A549 (cell line): ENCODE measurements at regions of chr16 and their contacts with region 1.

Region 1: GRCh38 chr16:11396241-11397048 is 51.2 kb downstream of the RMI2 start:
- DNase-seq: peak; percentile 67 to 94
- ATAC-seq: peak; percentile 74 to 93
- H3K4me3 ChIP-seq: no peak overlapping the region
- H3K27ac ChIP-seq: peak overlapping the region; percentile 73 to 81
- H3K4me1 ChIP-seq: peaks cover 4% of the 10 kb centered on the region; the same call in 2 of the 3 replicates
- CTCF ChIP-seq: peak; percentile 93
- EP300 ChIP-seq: no peak
- POLR2A ChIP-seq: no peak
- RAD21 ChIP-seq: peak; percentile 99

Region 2: DNA sequence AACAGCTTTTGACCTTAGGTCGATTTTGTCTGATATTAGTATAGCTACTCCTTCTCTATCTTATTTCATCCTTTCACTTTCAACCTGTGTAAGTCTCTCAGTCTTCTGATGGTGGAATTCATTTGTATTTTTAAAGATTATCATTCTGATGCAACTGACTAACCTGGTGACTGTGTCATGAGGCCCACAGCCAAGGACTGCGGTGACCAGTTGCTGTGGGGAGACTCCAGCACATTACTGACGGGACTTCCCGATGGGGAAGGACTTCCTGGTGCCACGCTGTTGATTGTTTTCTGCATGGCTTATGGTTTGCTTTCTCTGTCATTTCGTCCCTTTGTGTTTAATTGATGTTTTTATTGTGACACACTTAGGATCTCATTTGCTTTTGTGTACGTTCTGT is 17.0 kb before region 1 on chr16:
- CTCF ChIA-PET with region 1: interaction called, 300 read pairs
- POLR2A ChIA-PET with region 1: no interaction called
- DNase-seq: no peak
- ATAC-seq: no peak
- H3K4me3 ChIP-seq: no peak overlapping the region
- H3K27ac ChIP-seq: no peak overlapping the region
- H3K4me1 ChIP-seq: no peaks in the 10 kb centered on the region
- CTCF ChIP-seq: no peak
- EP300 ChIP-seq: no peak
- POLR2A ChIP-seq: no peak
- RAD21 ChIP-seq: no peak

Region 3: GRCh38 chr16:11423315-11424117 is 27.1 kb after region 1 on chr16:
- CTCF ChIA-PET with region 1: interaction called, 25 read pairs
- POLR2A ChIA-PET with region 1: no interaction called
- DNase-seq: no peak
- ATAC-seq: 0 out of 6 replicates have a peak, but pooled peaks of 1 of the 2 experiments have one; percentile 34
- H3K4me3 ChIP-seq: no peak overlapping the region
- H3K27ac ChIP-seq: no peak overlapping the region
- H3K4me1 ChIP-seq: no peaks in the 10 kb centered on the region
- CTCF ChIP-seq: no peak
- EP300 ChIP-seq: no peak
- POLR2A ChIP-seq: no peak
- RAD21 ChIP-seq: no peak

Region 4: DNA sequence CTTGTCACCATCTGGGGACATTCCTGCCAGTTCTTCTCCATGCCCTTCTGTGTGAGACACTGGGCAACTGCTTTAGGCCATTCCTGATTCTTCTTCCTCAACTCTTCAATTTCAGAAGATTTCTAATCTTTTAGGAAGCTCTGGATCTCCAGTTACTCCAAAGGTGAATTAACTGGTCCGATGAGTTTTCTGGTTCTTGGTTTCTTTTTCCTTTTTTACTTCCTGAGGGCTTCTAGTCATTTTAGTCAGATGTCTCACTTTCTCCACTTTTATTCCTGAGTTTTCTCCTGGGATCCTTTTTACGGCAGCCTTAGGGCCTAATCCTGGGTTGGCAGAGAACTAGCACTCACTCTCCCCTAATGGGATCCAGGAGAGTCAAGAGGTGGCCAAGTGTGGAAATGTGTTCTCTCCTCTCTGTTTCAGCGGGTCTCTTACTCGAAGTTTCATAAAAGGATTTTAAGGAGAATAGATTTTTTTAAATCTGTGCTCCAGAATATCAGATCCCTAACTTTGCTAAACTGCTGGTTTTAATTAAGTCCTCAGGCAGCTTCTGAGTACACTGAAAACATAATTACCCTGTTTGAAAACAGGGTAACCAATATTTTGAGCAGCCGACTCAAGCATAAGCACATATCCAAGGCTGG is 56.4 kb after region 1 on chr16:
- CTCF ChIA-PET with region 1: no interaction called
- POLR2A ChIA-PET with region 1: no interaction called
- DNase-seq: no peak
- ATAC-seq: no peak
- H3K4me3 ChIP-seq: no peak overlapping the region
- H3K27ac ChIP-seq: no peak overlapping the region
- H3K4me1 ChIP-seq: no peaks in the 10 kb centered on the region
- CTCF ChIP-seq: no peak
- EP300 ChIP-seq: no peak
- POLR2A ChIP-seq: no peak
- RAD21 ChIP-seq: no peak

Region 5: DNA sequence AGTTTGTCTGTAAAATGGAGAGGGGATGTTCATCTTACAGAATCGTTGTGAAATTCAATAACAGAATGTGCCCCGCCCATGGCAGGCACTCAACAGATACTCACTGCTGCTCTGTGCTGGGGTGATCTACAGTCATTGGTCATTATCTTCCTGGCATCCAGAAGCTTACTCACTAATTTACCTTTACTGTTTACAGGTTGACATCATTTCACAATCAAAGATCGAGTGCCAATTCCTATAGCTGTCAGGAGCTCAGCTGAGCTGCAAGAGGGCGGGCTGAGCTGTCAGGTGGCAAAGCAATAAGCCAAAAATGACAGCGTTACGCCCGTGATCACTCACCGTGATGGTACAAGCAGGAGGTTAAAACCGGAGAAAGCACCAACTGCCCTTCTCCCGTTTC is 139.0 kb after region 1 on chr16:
- CTCF ChIA-PET with region 1: interaction called, 12 read pairs
- POLR2A ChIA-PET with region 1: no interaction called
- DNase-seq: peak in 1 of 2 experiments; percentile 63
- ATAC-seq: peak; percentile 20 to 41; a peak in 3 of 6 replicates
- H3K4me3 ChIP-seq: no peak overlapping the region
- H3K27ac ChIP-seq: peak overlapping the region; percentile 56 to 80
- H3K4me1 ChIP-seq: peaks cover 32% of the 10 kb centered on the region
- CTCF ChIP-seq: no peak
- EP300 ChIP-seq: no peak
- POLR2A ChIP-seq: no peak
- RAD21 ChIP-seq: no peak

Region 6: DNA sequence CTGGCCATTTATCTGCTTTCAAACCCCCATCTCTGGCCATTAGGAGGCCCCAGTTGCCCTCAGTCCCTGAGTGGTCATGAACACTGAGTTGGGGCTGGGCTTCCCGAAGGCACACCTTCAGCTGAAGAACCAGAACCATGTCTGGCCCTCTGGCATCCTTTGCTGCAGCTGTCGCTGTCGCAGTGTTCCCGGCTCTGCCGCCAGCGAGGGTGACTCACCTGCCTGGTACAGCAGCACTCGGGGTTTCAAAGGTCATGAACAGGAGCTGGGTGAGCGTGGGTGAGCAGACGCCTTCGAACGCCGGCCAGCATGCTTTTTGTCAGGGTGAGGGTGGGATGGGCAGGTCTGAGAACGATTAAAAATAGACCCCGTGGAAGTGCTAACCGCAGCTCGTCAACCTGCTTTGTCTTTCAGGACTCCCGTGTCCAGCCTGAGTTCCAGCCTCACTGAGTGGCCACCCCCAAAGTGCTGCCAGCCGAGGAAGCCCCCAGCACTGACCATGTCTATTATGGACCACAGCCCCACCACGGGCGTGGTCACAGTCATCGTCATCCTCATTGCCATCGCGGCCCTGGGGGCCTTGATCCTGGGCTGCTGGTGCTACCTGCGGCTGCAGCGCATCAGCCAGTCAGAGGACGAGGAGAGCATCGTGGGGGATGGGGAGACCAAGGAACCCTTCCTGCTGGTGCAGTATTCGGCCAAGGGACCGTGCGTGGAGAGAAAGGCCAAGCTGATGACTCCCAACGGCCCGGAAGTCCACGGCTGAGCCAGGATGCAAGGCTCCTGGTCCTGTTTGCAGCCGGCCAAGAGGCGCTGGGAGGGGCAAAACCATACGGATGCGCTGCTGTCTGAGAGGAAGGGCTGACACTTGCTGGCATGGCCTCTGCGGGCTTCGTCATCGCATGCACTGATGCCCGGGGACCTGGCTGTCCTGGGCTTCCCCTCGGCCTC is 279.4 kb after region 1 on chr16:
- CTCF ChIA-PET with region 1: interaction called, 25 read pairs
- POLR2A ChIA-PET with region 1: no interaction called
- DNase-seq: peak; percentile 50 to 64
- ATAC-seq: peak; percentile 46 to 64
- H3K4me3 ChIP-seq: no peak overlapping the region
- H3K27ac ChIP-seq: peak overlapping the region; percentile 68 to 79
- H3K4me1 ChIP-seq: peaks cover 58% of the 10 kb centered on the region
- CTCF ChIP-seq: no peak
- EP300 ChIP-seq: no peak
- POLR2A ChIP-seq: no peak
- RAD21 ChIP-seq: peak in 1 of 2 experiments; percentile 14; a peak in 1 of 5 replicates

Region 7: DNA sequence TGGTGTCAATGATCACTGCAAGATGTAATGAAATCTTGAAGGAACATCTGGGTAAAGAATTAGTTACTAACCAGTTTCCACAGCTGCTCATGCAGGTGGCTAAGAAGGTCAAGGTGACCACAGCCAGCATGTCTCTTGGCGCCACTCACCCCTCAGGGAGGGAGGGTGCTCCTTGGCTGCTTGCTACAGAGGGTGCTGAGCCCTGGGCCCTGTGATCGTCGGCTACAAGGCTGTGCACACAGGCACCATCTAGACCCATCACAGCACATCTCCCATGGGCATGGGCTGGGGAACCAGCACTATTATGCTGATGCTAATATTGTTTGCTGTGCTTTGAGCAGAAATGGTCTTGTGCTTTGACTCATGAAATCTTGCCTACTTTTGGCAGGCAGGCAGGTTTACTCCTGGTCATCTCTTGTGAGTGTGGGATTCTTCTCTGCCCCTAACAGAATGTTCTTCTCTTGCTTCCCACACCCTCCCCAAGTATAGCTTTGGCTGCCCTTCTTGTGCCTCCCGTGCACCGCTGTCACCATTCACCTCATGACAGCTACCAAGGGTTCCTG is 309.8 kb after region 1 on chr16:
- CTCF ChIA-PET with region 1: interaction called, 344 read pairs
- POLR2A ChIA-PET with region 1: no interaction called
- DNase-seq: no peak
- ATAC-seq: no peak; a peak in 2 of 6 replicates
- H3K4me3 ChIP-seq: no peak overlapping the region
- H3K27ac ChIP-seq: no peak overlapping the region; a peak in 1 of 6 replicates
- H3K4me1 ChIP-seq: peaks cover 14% of the 10 kb centered on the region
- CTCF ChIP-seq: no peak
- EP300 ChIP-seq: no peak
- POLR2A ChIP-seq: no peak
- RAD21 ChIP-seq: no peak

Region 8: GRCh38 chr16:12067714-12068401 is 671.4 kb after region 1 on chr16:
- CTCF ChIA-PET with region 1: interaction called, 13 read pairs
- POLR2A ChIA-PET with region 1: no interaction called
- DNase-seq: peak; percentile 79 to 81
- ATAC-seq: peak; percentile 85 to 93
- H3K4me3 ChIP-seq: no peak overlapping the region
- H3K27ac ChIP-seq: no peak overlapping the region
- H3K4me1 ChIP-seq: no peaks in the 10 kb centered on the region
- CTCF ChIP-seq: peak; percentile 92
- EP300 ChIP-seq: no peak
- POLR2A ChIP-seq: no peak
- RAD21 ChIP-seq: peak; percentile 95 to 97